Adrenal gland (tissue), 19 donors: ENCODE measurements at regions of chrX and their contacts with region 1.

Region 1: DNA sequence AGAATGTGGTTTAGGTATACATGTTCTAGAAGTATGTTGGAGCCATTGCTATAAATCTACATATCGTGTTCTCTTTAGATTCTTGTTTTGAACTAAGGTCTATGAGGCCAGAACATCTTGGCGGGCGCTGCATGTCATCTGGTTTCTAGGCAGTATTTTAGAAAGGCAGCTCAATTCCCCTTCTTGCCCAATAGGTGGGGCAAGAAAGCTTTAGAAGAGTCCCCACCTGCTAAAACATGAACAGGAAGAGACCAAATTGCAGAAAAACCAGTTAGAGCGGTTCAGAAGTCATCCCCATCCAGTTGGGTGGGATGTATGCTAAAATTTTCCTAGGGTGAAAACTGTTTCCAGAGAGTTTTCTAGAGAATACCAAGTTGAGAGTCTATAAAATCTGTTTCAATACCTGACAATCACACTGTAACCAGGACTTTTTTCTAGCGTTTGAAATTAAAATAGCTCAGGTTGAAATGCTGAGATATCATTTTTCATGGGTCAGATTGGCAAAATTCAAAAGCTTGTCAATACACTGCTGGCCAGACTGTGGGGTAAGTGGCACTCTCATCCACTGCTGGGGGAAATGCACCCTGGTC is 17.5 kb upstream of the SH3KBP1 start:
- DNase-seq: peak in 3 of 7 donors; percentile 24 to 27 (median 26)
- H3K4me3 ChIP-seq: no peak overlapping the region
- H3K27ac ChIP-seq: no peak overlapping the region
- H3K4me1 ChIP-seq: no peaks in the 10 kb centered on the region
- H3K27me3 ChIP-seq: peaks cover 8% of the 10 kb centered on the region
- CTCF ChIP-seq: peak; percentile 26 to 68 (median 53)
- POLR2A ChIP-seq: no peak

Region 2: DNA sequence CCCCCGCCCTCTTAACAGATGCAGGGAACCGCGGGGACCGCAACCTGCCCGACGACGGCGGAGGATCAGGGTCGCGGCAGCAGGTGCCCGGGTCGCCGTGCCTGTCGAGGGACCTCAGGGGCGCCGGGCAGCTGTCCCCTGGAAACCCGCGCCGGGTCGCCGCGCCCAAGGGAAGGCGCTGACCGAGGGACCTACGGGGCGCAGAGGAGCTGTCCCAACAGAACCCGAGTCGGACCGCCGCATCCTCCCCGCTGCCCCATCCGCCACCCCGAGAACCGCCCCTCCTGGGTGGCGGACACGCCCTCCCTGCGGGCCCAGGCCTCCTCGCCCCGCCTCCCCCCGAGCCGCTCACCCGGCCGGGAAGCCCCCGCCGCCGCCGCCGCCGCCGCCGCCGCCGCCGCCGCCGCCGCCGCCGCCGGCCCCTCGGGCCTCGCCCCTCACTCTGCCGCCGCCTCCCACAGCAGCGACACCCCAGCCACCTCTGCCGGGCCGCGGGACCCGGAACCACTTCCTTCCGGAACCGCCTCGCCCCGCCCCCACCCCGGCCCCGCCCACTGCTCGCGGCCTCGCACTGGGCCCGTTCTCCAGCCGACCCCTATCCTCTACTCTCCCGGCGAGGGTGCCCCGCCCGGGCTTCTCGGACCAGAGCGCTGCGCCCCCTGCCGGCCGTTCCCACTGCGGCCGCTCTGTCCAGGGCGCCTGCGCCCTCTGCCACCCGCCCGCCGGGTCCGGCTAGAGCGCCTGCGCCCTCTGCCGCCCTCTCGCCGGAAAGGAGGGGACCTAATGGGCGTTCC is 85.9 kb after region 1 on chrX and contains the start of gene BCLAF3:
- intact Hi-C with region 1: loop called in 1 of 2 experiments (anchors 5 kb)
- DNase-seq: peak; percentile 86 to 92 (median 89)
- H3K4me3 ChIP-seq: peak within 1 kb of the TSS in 3 of 4 donors; percentile 25 to 85 (median 43)
- H3K27ac ChIP-seq: peak within 1 kb of the TSS in 3 of 5 donors; percentile 43 to 95 (median 65)
- H3K4me1 ChIP-seq: no peaks in the 10 kb centered on the region
- H3K27me3 ChIP-seq: peaks cover 6% of the 10 kb centered on the region
- CTCF ChIP-seq: peak; percentile 48 to 87 (median 62)
- POLR2A ChIP-seq: peak in 1 of 2 donors; percentile 9
- total RNA-seq, gene BCLAF3: 1.4 to 9.1 (median 5.5) TPM

Region 3: DNA sequence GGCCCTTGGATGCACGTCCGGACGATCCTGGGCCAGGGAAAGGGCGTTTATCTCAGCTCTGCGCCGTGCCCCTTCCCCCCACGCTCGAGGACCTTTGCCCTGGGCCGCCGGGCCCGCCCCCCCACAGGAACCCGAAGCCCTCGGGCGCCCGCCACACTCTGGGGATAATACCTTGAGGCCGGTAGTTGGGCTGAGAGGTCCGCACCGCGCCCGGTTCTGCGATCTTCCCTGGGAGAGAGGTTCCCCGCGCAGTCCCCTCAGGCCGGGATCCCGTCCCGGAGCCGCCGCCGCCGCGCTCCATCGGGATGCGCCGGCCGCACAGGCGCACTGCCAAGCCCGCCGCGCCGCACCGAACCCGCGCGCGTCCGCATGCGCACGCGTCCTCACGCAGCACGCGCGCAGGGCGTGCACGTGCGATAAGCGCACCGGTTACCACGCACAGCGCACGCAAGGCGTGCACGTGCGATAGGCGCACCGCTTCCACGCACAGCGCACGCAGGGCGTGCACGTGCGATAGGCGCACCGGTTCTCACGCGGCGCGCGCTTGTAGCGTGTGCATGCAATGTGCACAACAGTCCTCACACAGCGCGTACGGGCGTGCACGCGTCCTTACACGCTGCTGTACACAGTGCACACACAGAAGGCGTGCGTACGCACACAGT is 211.8 kb after region 1 on chrX and contains the start of gene MAP7D2:
- intact Hi-C with region 1: loop called in 1 of 2 experiments (anchors 10 kb)
- DNase-seq: no peak
- H3K4me3 ChIP-seq: peak within 1 kb of the TSS in 1 of 4 donors; percentile 30
- H3K27ac ChIP-seq: no peak within 1 kb of the TSS
- H3K4me1 ChIP-seq: no peaks in the 10 kb centered on the region
- H3K27me3 ChIP-seq: peaks cover 22% of the 10 kb centered on the region
- CTCF ChIP-seq: no peak
- POLR2A ChIP-seq: no peak
- total RNA-seq, gene MAP7D2: 0.25 to 1.9 (median 0.69) TPM